Aorta (tissue), 5 donors: ENCODE measurements at regions of chr15 and their contacts with region 1.

Region 1: GRCh38 chr15:99104788-99105513 is at the start of gene SYNM:
- DNase-seq: peak; percentile 85 to 94
- ATAC-seq: peak; percentile 92
- H3K4me3 ChIP-seq: peak within 1 kb of the TSS; percentile 24 to 42
- H3K27ac ChIP-seq: peak within 1 kb of the TSS; percentile 54 to 80
- H3K4me1 ChIP-seq: peaks cover 3 to 4% of the 10 kb centered on the region in 2 donors
- H3K27me3 ChIP-seq: no peaks in the 10 kb centered on the region
- total RNA-seq, gene SYNM: 81.9 to 103 TPM

Region 2: DNA sequence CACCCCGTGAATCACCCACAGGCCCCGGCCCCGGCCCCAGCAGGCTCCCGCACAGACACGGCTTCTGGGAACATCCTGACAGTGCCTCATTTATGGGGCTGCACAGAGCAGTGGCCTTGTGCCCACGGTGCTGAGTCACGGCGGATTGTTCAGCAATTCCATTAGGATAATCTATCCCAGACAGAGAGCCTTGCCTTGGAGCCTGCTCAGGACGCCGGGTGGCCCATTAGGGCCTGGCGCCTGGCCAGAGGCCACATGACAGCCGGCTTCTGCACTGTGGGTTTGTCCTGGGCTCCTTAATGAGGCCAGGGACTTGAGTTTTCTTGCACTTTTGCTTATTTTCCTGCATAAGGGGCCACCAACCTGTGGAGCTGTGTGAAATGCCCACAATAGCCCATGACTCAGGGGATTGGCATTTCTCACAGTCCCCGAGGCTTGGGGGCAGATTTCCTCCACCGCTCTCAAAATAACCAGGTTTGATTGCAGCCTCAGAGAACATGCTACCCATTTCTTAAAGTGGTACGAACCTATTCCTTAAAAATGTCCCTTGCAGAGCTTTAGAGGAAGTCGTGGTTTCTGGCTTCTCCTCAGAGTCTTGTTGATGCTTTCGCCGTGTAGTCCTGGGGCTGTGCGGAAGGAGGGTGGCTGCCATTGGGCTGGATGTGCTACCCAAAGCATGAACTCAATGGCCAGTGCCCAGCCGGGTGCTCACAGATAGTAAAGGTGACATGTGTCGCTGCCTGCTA is 18.9 kb after region 1 on chr15:
- intact Hi-C with region 1: loop called in 1 of 2 experiments (anchors 2 kb)
- DNase-seq: peak; percentile 93 to 95
- ATAC-seq: peak; percentile 93
- H3K4me3 ChIP-seq: no peak overlapping the region
- H3K27ac ChIP-seq: peak overlapping the region; percentile 84 to 100
- H3K4me1 ChIP-seq: no peaks in the 10 kb centered on the region
- H3K27me3 ChIP-seq: no peaks in the 10 kb centered on the region

Region 3: GRCh38 chr15:99143655-99144610 is 39.0 kb after region 1 on chr15:
- intact Hi-C with region 1: loop called in 1 of 2 experiments (anchors 5 kb)
- DNase-seq: peak; percentile 87 to 90
- ATAC-seq: peak; percentile 90
- H3K4me3 ChIP-seq: no peak overlapping the region
- H3K27ac ChIP-seq: peak overlapping the region; percentile 59 to 95
- H3K4me1 ChIP-seq: no peaks in the 10 kb centered on the region
- H3K27me3 ChIP-seq: no peaks in the 10 kb centered on the region

Region 4: DNA sequence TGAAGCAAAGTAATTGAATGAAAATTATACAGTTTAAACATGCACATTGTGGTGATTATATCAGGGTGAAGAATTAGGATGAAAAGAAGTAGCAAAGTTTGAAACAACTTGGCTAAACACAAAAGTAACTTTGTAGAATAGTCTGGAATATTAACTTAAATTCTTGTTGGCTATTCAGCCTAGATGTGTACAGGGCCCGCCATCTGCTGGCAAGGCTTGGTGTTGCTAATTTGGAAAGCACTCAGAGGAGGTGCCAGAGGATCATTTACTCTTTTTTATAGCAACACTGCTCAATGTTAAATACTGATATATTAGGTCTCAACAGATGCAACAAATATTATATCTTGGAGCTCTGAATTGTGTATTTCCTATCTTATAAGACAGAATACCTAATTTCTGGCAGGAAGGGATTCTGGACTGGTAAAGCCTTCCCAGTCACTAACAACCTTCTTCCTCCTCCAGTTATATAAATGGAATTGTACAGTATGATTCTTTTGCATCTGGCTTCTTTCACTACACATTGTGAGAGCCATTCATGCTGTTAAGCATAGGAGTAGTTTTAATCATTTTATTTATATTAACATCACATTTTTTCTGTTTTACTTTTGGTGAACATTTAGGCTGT is 108.3 kb after region 1 on chr15:
- intact Hi-C with region 1: loop called (anchors 1 to 2 kb)
- DNase-seq: peak; percentile 86 to 93
- ATAC-seq: peak; percentile 90
- H3K4me3 ChIP-seq: no peak overlapping the region
- H3K27ac ChIP-seq: no peak overlapping the region
- H3K4me1 ChIP-seq: no peaks in the 10 kb centered on the region
- H3K27me3 ChIP-seq: no peaks in the 10 kb centered on the region

Region 5: DNA sequence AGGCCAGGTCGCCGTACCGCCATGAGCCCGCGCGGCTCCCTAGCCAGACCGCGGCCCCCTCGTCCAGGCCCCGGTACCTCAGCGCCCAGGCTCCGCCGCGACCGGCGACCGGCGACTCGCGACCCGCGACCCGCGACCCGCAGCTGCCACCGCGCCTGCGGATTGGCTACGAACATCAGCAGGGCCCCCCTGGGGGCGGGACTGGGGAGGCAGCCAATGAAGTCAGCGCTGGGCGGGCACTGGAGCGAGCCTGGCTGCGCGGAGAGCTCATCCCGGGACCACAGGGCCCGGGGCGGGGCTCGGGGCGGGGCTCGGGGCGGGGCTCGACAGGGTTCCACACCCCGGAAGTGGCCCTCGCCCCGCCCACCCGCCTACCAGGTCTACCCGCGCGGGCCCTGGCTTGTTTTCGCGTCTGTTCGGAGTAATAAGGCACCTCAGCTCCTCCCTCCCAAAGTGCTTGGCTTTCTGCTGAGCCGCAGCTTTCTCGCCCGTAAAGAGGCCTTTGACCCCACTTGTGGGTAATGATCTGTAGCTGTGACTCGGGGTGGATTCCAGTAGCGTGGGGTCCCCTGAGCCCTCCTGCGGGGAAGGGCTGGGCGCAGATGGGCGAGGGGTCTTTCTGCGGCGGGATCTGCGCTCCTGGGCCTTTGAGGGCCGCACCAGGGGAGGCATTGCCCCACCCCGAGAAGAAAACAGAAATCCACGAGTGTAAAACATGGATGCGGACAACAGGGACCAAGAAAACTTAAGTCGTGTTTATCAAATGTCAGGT is 628.5 kb after region 1 on chr15 and contains the start of gene LYSMD4:
- intact Hi-C with region 1: loop called in 1 of 2 experiments (anchors 10 kb)
- DNase-seq: peak; percentile 99 to 100
- ATAC-seq: peak; percentile 98
- H3K4me3 ChIP-seq: peak within 1 kb of the TSS; percentile 88 to 92
- H3K27ac ChIP-seq: peak within 1 kb of the TSS in 1 of 2 donors; percentile 71
- H3K4me1 ChIP-seq: no peaks in the 10 kb centered on the region
- H3K27me3 ChIP-seq: no peaks in the 10 kb centered on the region
- total RNA-seq, gene LYSMD4: 7.7 to 14.3 TPM